ENCODE measurements at regions of chr1 and their contacts with region 1.

Region 1: GRCh38 chr1:213122514-213122929 is 71.5 kb downstream of the RPS6KC1 start:
- DNase-seq: peak; percentile 5
- H3K4me3 ChIP-seq: no peak overlapping the region
- H3K27ac ChIP-seq: peak overlapping the region in 1 of 2 experiments; percentile 38; a peak in 1 of 4 replicates
- H3K4me1 ChIP-seq: peaks cover 4 to 16% of the 10 kb centered on the region in 2 experiments; a peak in 3 of 4 replicates
- H3K27me3 ChIP-seq: no peaks in the 10 kb centered on the region
- CTCF ChIP-seq: peak; percentile 67
- EP300 ChIP-seq: no peak
- RAD21 ChIP-seq: peak; percentile 70

Region 2: GRCh38 chr1:213135572-213135971 is 13.1 kb after region 1 on chr1:
- CTCF ChIA-PET with region 1: interaction called, 31 read pairs
- POLR2A ChIA-PET with region 1: no interaction called
- DNase-seq: no peak
- H3K4me3 ChIP-seq: no peak overlapping the region
- H3K27ac ChIP-seq: no peak overlapping the region; a peak in 1 of 4 replicates
- H3K4me1 ChIP-seq: peaks cover 0 to 4% of the 10 kb centered on the region in 2 experiments; a peak in 2 of 4 replicates
- H3K27me3 ChIP-seq: no peaks in the 10 kb centered on the region
- CTCF ChIP-seq: no peak
- EP300 ChIP-seq: no peak
- RAD21 ChIP-seq: no peak